PC-9 (cell line): ENCODE measurements at regions of chr5 and their contacts with region 1.

Region 1: GRCh38 chr5:103587185-103587748 is 24.7 kb upstream of the NUDT12 start:
- DNase-seq: no peak
- H3K4me3 ChIP-seq: no peak overlapping the region
- H3K27ac ChIP-seq: no peak overlapping the region
- H3K4me1 ChIP-seq: no peaks in the 10 kb centered on the region
- H3K27me3 ChIP-seq: no peaks in the 10 kb centered on the region
- CTCF ChIP-seq: peak; percentile 69

Region 2: GRCh38 chr5:103808464-103809106 is 221.3 kb after region 1 on chr5:
- CTCF ChIA-PET with region 1: interaction called, 4 read pairs
- POLR2A ChIA-PET with region 1: no interaction called
- intact Hi-C with region 1: loop called (anchors 5 kb)
- DNase-seq: peak in 1 of 2 experiments; percentile 29
- H3K4me3 ChIP-seq: no peak overlapping the region
- H3K27ac ChIP-seq: no peak overlapping the region
- H3K4me1 ChIP-seq: no peaks in the 10 kb centered on the region
- H3K27me3 ChIP-seq: no peaks in the 10 kb centered on the region
- CTCF ChIP-seq: peak; percentile 93